A549 (cell line): ENCODE measurements at regions of chr1 and their contacts with region 1.

Region 1: DNA sequence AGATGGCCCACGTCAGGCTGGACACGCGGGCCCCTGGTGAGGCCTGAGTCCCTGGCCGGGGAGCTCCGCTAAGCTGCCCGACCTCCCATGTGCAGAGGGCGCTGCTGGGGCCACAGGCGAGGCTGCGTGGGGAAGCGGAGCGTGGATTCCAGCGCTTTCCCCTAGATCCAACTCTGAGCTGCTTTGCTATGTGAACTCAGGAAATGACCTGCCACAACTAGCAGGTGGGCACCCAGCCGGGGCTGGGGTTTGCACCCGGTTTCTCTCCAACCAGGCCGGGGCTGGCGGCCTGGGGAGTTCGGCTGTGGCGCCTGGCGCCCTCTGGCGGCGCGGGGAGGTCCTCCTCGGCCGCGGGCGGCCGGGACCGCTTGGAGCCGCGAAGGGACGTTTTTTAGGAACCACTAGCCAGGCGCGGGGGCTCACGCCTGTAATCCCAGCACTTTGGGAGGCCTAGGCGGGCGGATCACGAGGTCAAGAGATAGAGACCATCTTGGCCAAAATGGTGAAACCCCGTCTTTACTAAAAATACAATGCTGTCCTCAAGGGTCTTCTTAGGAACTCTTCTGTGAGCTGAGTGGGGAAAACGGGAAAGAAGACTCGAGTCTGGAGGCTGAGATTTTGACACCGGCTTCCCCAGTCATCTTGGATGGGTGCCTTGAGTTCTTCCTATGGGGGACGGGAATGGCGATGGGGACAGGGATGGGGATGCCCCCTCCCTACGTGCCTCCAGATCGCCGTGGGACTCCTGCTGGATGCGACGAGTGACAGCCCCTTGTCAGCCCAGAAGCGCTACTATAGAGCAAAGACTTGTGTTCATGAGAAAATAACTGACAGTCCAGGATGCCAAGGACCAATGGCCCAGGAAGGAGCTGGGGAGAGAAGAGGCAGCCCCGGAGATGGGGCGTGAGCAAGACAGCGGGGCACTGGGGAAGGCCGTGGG is 12.6 kb downstream of the PYCR2 start:
- DNase-seq: peak; percentile 54 to 74
- ATAC-seq: peak; percentile 86 to 96
- H3K4me3 ChIP-seq: peak overlapping the region; percentile 29
- H3K27ac ChIP-seq: peak overlapping the region; percentile 62 to 79
- H3K4me1 ChIP-seq: 0 out of 3 replicates have a peak, but pooled peaks cover 3% of the 10 kb centered on the region
- CTCF ChIP-seq: peak; percentile 99
- EP300 ChIP-seq: no peak
- POLR2A ChIP-seq: no peak
- RAD21 ChIP-seq: peak; percentile 73 to 95

Region 2: GRCh38 chr1:225777583-225778336 is 133.7 kb before region 1 on chr1 and contains the start of gene SRP9:
- CTCF ChIA-PET with region 1: interaction called, 12 read pairs
- POLR2A ChIA-PET with region 1: interaction called, 6 read pairs
- DNase-seq: peak; percentile 92 to 98
- ATAC-seq: peak; percentile 99 to 100
- H3K4me3 ChIP-seq: peak within 1 kb of the TSS; percentile 85
- H3K27ac ChIP-seq: peak within 1 kb of the TSS; percentile 93 to 97
- H3K4me1 ChIP-seq: peaks cover 46% of the 10 kb centered on the region
- CTCF ChIP-seq: peak; percentile 82
- EP300 ChIP-seq: no peak
- POLR2A ChIP-seq: no peak; the same call in 1 of the 2 replicates
- RAD21 ChIP-seq: peak; percentile 63 to 71
- polyA plus RNA-seq, gene SRP9: 512 and 629 TPM in 2 replicates

Region 3: DNA sequence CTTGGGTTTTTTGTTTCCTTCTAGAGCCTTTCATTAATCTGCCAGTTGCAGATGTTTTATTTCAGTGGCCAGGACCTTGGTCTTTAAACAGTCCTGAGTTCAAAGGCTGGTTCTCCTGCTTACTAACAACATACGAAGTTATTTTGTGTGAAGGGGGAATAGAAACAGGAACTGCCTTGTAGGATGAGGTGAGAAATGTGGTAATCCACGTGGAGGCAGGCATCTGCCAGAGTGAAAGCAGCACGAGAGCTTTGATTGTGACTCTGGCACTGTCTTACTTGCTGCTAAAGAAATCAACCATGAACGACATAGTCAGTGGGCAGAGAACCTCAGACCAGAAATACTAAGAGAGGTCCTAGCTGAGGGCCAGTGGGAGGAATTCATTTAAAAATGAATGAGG is 59.7 kb before region 1 on chr1:
- CTCF ChIA-PET with region 1: interaction called, 12 read pairs
- POLR2A ChIA-PET with region 1: no interaction called
- DNase-seq: no peak
- ATAC-seq: no peak
- H3K4me3 ChIP-seq: no peak overlapping the region
- H3K27ac ChIP-seq: no peak overlapping the region
- H3K4me1 ChIP-seq: no peaks in the 10 kb centered on the region
- CTCF ChIP-seq: no peak
- EP300 ChIP-seq: no peak
- POLR2A ChIP-seq: no peak
- RAD21 ChIP-seq: no peak

Region 4: GRCh38 chr1:225881969-225882693 is 29.3 kb before region 1 on chr1 and contains the start of gene TMEM63A:
- CTCF ChIA-PET with region 1: interaction called, 207 read pairs
- POLR2A ChIA-PET with region 1: interaction called, 4 read pairs
- DNase-seq: peak; percentile 83 to 92
- ATAC-seq: peak; percentile 82 to 90
- H3K4me3 ChIP-seq: peak within 1 kb of the TSS; percentile 86
- H3K27ac ChIP-seq: peak within 1 kb of the TSS; percentile 88 to 95
- H3K4me1 ChIP-seq: peaks cover 35% of the 10 kb centered on the region
- CTCF ChIP-seq: 0 out of 3 replicates have a peak, but pooled peaks have one; percentile 18
- EP300 ChIP-seq: no peak
- POLR2A ChIP-seq: peak; percentile 79
- RAD21 ChIP-seq: peak in 1 of 2 experiments; percentile 23; a peak in 1 of 5 replicates
- polyA plus RNA-seq, gene TMEM63A: 9.5 and 12.4 TPM in 2 replicates

Region 5: GRCh38 chr1:225923692-225924555 is 12.5 kb after region 1 on chr1 and contains the start of gene PYCR2:
- CTCF ChIA-PET with region 1: interaction called, 54 read pairs
- POLR2A ChIA-PET with region 1: interaction called, 14 read pairs
- DNase-seq: peak; percentile 95 to 98
- ATAC-seq: peak; percentile 97 to 99
- H3K4me3 ChIP-seq: peak within 1 kb of the TSS; percentile 89
- H3K27ac ChIP-seq: peak within 1 kb of the TSS; percentile 98 to 99
- H3K4me1 ChIP-seq: peaks cover 16% of the 10 kb centered on the region
- CTCF ChIP-seq: no peak
- EP300 ChIP-seq: no peak
- POLR2A ChIP-seq: peak; percentile 94
- RAD21 ChIP-seq: no peak
- polyA plus RNA-seq, gene PYCR2: 45.4 and 45.8 TPM in 2 replicates